CD8-positive, alpha-beta T cell (primary cell): ENCODE measurements at regions of chr11 and their contacts with region 1.

Region 1: GRCh38 chr11:66466225-66467027 is at the start of gene PELI3:
- DNase-seq: peak; percentile 92 to 97 (median 95)
- ATAC-seq: peak; percentile 92
- H3K4me3 ChIP-seq: peak within 1 kb of the TSS; percentile 59 to 92
- H3K4me3 Mint-ChIP-seq: peak within 1 kb of the TSS; percentile 91
- H3K27ac ChIP-seq: peak within 1 kb of the TSS; percentile 56 to 74
- H3K27ac Mint-ChIP-seq: peak within 1 kb of the TSS; percentile 91
- H3K4me1 ChIP-seq: peaks cover 20% of the 10 kb centered on the region
- H3K4me1 Mint-ChIP-seq: peaks cover 22% of the 10 kb centered on the region
- H3K27me3 ChIP-seq: no peaks in the 10 kb centered on the region
- H3K27me3 Mint-ChIP-seq: no peaks in the 10 kb centered on the region
- CTCF ChIP-seq: no peak
- total RNA-seq, gene PELI3: 12.6 to 16.8 TPM

Region 2: DNA sequence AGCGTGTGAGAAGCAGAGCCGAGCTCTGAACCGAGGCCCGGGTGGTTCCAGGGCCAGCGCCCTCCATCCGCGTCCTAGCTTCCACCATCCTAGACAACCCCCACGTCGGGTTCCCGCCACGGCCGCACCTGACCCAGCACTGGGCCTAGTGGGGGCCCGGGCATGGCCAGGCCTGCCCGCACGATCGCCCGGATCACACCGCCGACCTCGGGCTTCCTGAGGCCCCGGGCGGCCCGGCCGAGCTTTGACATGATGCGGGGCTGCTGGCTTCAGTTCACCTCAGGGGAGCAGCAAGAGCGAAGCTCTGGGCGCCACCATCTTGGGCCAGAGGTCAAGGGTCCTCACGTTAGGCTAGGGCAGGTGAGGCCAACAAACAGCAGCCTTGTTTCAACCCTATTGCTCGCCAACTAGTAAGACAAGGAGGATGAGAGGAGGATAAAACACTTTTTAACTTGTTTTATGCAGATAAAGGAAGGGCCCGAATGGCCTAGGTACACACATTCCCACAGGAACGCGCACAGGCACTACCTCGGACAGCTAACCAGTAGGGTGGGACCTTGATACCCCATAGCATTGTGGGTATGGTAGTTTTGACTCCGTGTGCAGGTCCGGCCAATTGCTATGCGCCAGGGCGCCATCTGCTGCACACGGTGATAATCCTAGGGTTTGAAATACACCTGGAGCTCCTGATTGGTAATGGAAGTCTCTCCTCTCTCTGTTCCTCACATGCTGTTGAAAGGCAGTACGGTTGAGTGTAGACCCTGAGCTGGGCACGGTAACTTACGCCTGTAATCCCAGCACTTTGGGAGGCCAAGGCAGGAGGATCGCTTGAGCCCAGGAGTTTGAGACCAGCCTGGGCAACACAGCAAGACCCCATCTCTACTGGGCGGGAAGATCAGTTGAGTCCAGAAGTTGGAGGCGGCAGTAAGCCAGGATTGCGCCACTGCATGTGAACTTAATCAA is 27.6 kb before region 1 on chr11 and contains the start of gene MRPL11:
- CTCF ChIA-PET with region 1: interaction called, 14 read pairs
- POLR2A ChIA-PET with region 1: interaction called, 6 read pairs
- intact Hi-C with region 1: loop called (anchors 1 kb)
- DNase-seq: peak; percentile 79 to 96 (median 90)
- ATAC-seq: peak; percentile 99
- H3K4me3 ChIP-seq: peak within 1 kb of the TSS; percentile 72 to 78
- H3K4me3 Mint-ChIP-seq: peak within 1 kb of the TSS; percentile 91
- H3K27ac ChIP-seq: peak within 1 kb of the TSS; percentile 66 to 85
- H3K27ac Mint-ChIP-seq: peak within 1 kb of the TSS; percentile 98
- H3K4me1 ChIP-seq: peaks cover 7% of the 10 kb centered on the region
- H3K4me1 Mint-ChIP-seq: peaks cover 10% of the 10 kb centered on the region
- H3K27me3 ChIP-seq: no peaks in the 10 kb centered on the region
- H3K27me3 Mint-ChIP-seq: peaks cover 2% of the 10 kb centered on the region
- CTCF ChIP-seq: peak; percentile 64
- total RNA-seq, gene MRPL11: 19.8 to 20.6 TPM

Region 3: DNA sequence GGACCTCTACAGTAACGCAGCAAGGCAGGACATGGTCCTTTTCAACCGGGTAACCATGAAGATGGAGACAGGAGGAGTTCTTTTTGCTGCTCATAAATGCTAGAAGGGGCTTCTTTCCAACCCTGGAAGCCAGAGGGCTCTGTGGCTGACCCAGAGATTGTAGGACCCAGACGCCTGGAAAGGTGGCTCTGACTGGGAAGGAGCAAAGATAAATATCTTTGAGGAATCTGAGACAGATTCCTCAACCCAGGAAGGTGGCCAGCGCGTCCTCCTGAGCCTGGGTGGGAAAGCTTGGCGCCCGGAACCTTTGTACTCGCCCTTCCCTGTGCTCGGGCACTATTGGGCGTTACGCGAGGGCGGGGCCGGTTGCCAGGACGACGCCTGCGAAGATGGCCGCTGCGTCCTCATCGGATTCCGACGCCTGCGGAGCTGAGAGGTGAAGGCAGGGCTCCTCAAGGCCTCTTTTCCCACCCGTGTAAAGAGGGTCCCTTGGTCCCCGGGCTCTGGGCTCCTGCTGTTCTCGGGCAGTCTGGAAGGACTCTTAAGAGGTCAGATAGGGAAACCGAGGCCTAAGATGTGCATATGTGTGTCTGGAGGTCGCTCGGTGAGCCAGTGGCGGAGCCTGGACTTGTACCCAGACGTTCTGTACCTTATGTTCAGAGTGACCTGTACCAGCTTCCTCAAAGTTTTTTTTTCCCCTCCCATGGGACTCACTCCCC is 44.0 kb after region 1 on chr11 and contains the start of gene BBS1:
- CTCF ChIA-PET with region 1: no interaction called
- POLR2A ChIA-PET with region 1: interaction called, 4 read pairs
- intact Hi-C with region 1: loop called in 1 of 2 experiments (anchors 2 kb)
- DNase-seq: peak; percentile 62 to 91 (median 84)
- ATAC-seq: peak; percentile 98
- H3K4me3 ChIP-seq: peak within 1 kb of the TSS; percentile 68 to 81
- H3K4me3 Mint-ChIP-seq: peak within 1 kb of the TSS; percentile 88
- H3K27ac ChIP-seq: peak within 1 kb of the TSS; percentile 57 to 62
- H3K27ac Mint-ChIP-seq: peak within 1 kb of the TSS; percentile 22
- H3K4me1 ChIP-seq: peaks cover 15% of the 10 kb centered on the region
- H3K4me1 Mint-ChIP-seq: peaks cover 13% of the 10 kb centered on the region
- H3K27me3 ChIP-seq: no peaks in the 10 kb centered on the region
- H3K27me3 Mint-ChIP-seq: no peaks in the 10 kb centered on the region
- CTCF ChIP-seq: no peak
- total RNA-seq, gene BBS1: 10.8 to 13.5 TPM

Region 4: DNA sequence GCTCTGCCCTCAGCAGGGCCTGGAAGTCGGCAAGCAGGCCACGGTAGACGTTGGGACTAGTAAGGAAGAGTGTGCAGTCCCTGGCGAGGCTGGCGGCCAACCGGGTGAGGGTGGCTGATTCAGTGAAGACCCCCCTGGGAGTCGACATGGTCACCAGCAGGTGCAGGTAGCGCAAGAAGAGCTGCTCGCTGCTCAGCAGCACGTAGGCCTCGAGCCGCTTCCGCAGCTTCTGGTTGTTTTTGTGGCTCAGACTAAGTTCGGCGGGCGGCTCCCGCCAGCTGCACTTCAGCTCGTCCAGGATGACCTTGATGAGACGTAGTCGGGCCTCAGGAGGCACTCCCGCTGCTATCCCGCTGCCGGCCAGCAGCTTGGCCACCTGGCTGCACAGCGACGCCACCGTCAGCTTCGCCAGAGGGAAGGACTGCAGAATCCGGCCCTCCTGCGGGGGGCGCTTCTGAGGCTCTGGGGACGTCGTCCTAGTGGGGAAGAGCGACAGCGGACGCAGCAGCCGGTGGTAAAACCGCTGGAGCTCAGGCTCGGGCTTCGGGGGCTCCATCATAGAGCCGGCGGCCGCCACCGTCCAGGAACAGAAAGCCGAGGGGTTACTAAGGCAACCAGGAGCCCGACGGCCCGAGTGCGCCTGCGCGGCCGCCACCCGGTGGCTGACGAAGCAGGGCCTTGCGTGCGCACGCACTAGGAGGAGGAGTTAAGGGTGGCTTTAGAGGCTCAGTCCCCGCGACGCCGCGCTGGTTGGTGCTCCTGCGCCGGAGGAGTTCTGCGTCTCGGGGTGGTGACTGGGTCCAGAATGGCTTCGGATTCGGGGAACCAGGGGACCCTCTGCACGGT is 126.3 kb after region 1 on chr11 and contains the starts of genes CCDC87 and CCS:
- CTCF ChIA-PET with region 1: no interaction called
- POLR2A ChIA-PET with region 1: no interaction called
- intact Hi-C with region 1: loop called in 1 of 2 experiments (anchors 2 kb)
- DNase-seq: peak; percentile 98 to 100 (median 99)
- ATAC-seq: peak; percentile 97
- H3K4me3 ChIP-seq: peak within 1 kb of the TSS; percentile 68 to 97
- H3K4me3 Mint-ChIP-seq: peak within 1 kb of the TSS; percentile 100
- H3K27ac ChIP-seq: peak within 1 kb of the TSS; percentile 84 to 86
- H3K27ac Mint-ChIP-seq: peak within 1 kb of the TSS; percentile 99
- H3K4me1 ChIP-seq: peaks cover 33% of the 10 kb centered on the region
- H3K4me1 Mint-ChIP-seq: peaks cover 39% of the 10 kb centered on the region
- H3K27me3 ChIP-seq: no peaks in the 10 kb centered on the region
- H3K27me3 Mint-ChIP-seq: no peaks in the 10 kb centered on the region
- CTCF ChIP-seq: peak; percentile 55
- total RNA-seq, gene CCDC87: 0.53 to 0.65 TPM
- total RNA-seq, gene CCS: 30.0 to 32.3 TPM